Activated CD4-positive, alpha-beta memory T cell treated with anti-CD3 and anti-CD28 coated beads for 36 hours (primary cell): ENCODE measurements at regions of chr14 and their contacts with region 1.

Region 1: GRCh38 chr14:76956316-76957090 is 72.0 kb downstream of the IRF2BPL start:
- DNase-seq: peak; percentile 97
- H3K4me3 Mint-ChIP-seq: peak overlapping the region; percentile 79
- H3K27ac Mint-ChIP-seq: peak overlapping the region; percentile 99
- H3K4me1 Mint-ChIP-seq: peaks cover 77% of the 10 kb centered on the region
- H3K27me3 Mint-ChIP-seq: no peaks in the 10 kb centered on the region

Region 2: DNA sequence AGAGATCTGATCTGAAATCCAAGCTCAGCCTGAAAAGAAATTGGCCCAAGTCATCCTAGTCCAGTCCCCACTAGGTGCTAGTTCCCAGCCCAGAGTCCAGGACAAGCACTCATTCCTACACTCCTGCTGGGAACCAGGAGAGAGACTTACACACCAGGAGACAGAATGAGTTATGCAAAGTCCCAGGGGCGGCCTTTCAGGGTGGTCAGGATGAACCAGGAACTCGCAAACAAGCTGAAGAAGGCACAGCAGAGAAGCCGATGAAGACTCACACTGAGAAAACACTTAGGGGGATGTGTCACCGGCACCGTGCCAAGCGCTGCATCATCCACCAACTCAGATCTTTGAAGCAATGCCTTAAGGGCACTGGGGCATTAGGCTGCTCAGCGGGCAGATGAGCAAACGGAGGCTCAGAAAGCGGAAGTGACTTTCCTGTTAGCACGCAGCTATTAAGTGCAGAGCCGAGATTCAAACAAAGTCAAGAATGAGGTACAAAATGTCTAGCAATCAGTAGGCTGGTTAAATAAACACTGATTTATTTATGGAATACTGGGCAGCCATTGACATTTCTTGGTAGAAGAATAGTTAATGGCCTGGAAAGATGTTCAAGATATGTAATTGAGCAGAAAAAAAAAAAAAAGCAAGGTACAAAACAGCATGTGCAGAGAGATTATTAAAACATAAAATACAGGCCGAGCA is 51.6 kb before region 1 on chr14:
- CTCF ChIA-PET with region 1: no interaction called
- POLR2A ChIA-PET with region 1: no interaction called
- intact Hi-C with region 1: loop called (anchors 2 kb)
- DNase-seq: peak; percentile 93
- H3K4me3 Mint-ChIP-seq: peak overlapping the region; percentile 14
- H3K27ac Mint-ChIP-seq: peak overlapping the region; percentile 70
- H3K4me1 Mint-ChIP-seq: peaks cover 28% of the 10 kb centered on the region
- H3K27me3 Mint-ChIP-seq: no peaks in the 10 kb centered on the region

Region 3: GRCh38 chr14:76926521-76927251 is 29.8 kb before region 1 on chr14:
- CTCF ChIA-PET with region 1: interaction called, 6 read pairs
- POLR2A ChIA-PET with region 1: interaction called, 5 read pairs
- intact Hi-C with region 1: loop called (anchors 1 kb)
- DNase-seq: peak; percentile 75
- H3K4me3 Mint-ChIP-seq: peak overlapping the region; percentile 26
- H3K27ac Mint-ChIP-seq: peak overlapping the region; percentile 54
- H3K4me1 Mint-ChIP-seq: peaks cover 70% of the 10 kb centered on the region
- H3K27me3 Mint-ChIP-seq: no peaks in the 10 kb centered on the region

Region 4: GRCh38 chr14:77023001-77023996 is 66.8 kb after region 1 on chr14:
- CTCF ChIA-PET with region 1: interaction called, 18 read pairs
- POLR2A ChIA-PET with region 1: interaction called, 24 read pairs
- intact Hi-C with region 1: loop called (anchors 1 kb)
- DNase-seq: peak; percentile 79
- H3K4me3 Mint-ChIP-seq: peak overlapping the region; percentile 58
- H3K27ac Mint-ChIP-seq: peak overlapping the region; percentile 87
- H3K4me1 Mint-ChIP-seq: peaks cover 44% of the 10 kb centered on the region
- H3K27me3 Mint-ChIP-seq: no peaks in the 10 kb centered on the region

Region 5: DNA sequence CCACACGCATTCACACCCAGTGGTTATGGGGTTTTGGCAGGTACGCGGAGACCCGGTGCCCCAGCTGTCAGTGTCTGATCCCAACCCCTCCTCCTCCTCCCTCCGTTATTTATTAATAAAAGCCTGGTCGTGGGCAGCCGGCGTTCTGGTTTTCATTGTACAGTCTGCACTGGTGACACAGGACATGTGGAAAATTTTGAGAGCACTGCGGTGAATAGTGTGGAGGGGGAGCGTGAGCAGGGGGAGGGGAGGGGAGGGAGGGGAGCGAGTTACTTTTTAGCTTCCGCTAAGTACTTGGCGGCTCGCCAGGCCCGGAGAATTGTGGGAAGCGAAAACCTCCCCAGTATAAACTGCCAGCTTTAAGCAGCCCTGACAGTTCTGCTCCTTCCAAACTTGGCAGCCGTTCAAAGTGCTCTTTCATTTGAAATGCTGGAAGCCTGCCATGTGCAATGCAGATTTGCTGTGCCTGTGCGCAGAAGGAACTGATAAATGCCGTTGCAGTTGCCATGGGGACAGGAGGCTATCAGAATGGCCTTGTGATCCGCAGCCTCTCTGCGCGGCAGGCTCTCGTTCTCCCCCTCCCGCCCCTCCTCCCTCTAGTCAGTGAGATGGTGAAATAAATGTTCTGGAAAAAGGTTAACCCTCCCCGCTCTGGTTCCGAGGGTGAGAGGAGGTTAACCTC is 83.7 kb after region 1 on chr14:
- CTCF ChIA-PET with region 1: interaction called, 9 read pairs
- POLR2A ChIA-PET with region 1: interaction called, 17 read pairs
- intact Hi-C with region 1: loop called (anchors 1 kb)
- DNase-seq: peak; percentile 97
- H3K4me3 Mint-ChIP-seq: peak overlapping the region; percentile 77
- H3K27ac Mint-ChIP-seq: peak overlapping the region; percentile 99
- H3K4me1 Mint-ChIP-seq: peaks cover 88% of the 10 kb centered on the region
- H3K27me3 Mint-ChIP-seq: no peaks in the 10 kb centered on the region

Region 6: GRCh38 chr14:77301103-77301502 is 344.6 kb after region 1 on chr14:
- CTCF ChIA-PET with region 1: no interaction called
- POLR2A ChIA-PET with region 1: no interaction called
- intact Hi-C with region 1: loop called (anchors 5 kb)
- DNase-seq: peak; percentile 78
- H3K4me3 Mint-ChIP-seq: no peak overlapping the region
- H3K27ac Mint-ChIP-seq: no peak overlapping the region
- H3K4me1 Mint-ChIP-seq: peaks cover 24% of the 10 kb centered on the region
- H3K27me3 Mint-ChIP-seq: no peaks in the 10 kb centered on the region